Heart left ventricle (tissue), 16 donors: ENCODE measurements at regions of chr2 and their contacts with region 1.

Region 1: GRCh38 chr2:209334198-209335017 is 89.4 kb upstream of the MAP2 start:
- DNase-seq: peak; percentile 27 to 60 (median 46)
- ATAC-seq: peak in 3 of 4 donors; percentile 50 to 52 (median 51)
- H3K4me3 ChIP-seq: no peak overlapping the region
- H3K27ac ChIP-seq: no peak overlapping the region
- H3K4me1 ChIP-seq: peaks cover 0 to 6% (median 0%) of the 10 kb centered on the region in 12 donors
- H3K27me3 ChIP-seq: no peaks in the 10 kb centered on the region
- CTCF ChIP-seq: peak; percentile 82 to 98 (median 94)
- POLR2A ChIP-seq: no peak

Region 2: GRCh38 chr2:209423562-209424198 is 89.3 kb after region 1 on chr2 and contains the start of gene MAP2:
- intact Hi-C with region 1: loop called in 9 of 10 experiments (anchors 1 to 5 kb)
- DNase-seq: peak; percentile 84 to 91 (median 88)
- ATAC-seq: peak; percentile 93 to 100 (median 98)
- H3K4me3 ChIP-seq: peak within 1 kb of the TSS; percentile 30 to 77 (median 66)
- H3K27ac ChIP-seq: peak within 1 kb of the TSS in 7 of 12 donors; percentile 7 to 74 (median 44)
- H3K4me1 ChIP-seq: peaks cover 0 to 27% (median 13%) of the 10 kb centered on the region in 12 donors
- H3K27me3 ChIP-seq: peaks cover 0 to 4% (median 0%) of the 10 kb centered on the region in 9 donors
- CTCF ChIP-seq: peak; percentile 44 to 100 (median 93)
- POLR2A ChIP-seq: peak in 1 of 2 donors; percentile 78
- total RNA-seq, gene MAP2: 5.5 to 19.3 (median 8.9) TPM

Region 3: GRCh38 chr2:209565896-209566582 is 231.6 kb after region 1 on chr2:
- intact Hi-C with region 1: loop called in 2 of 10 experiments (anchors 5 kb)
- DNase-seq: no peak
- ATAC-seq: no peak
- H3K4me3 ChIP-seq: no peak overlapping the region
- H3K27ac ChIP-seq: no peak overlapping the region
- H3K4me1 ChIP-seq: no peaks in the 10 kb centered on the region
- H3K27me3 ChIP-seq: no peaks in the 10 kb centered on the region
- CTCF ChIP-seq: no peak
- POLR2A ChIP-seq: no peak

Region 4: GRCh38 chr2:209960676-209961630 is 626.5 kb after region 1 on chr2:
- intact Hi-C with region 1: loop called (anchors 1 to 10 kb)
- DNase-seq: peak in 4 of 5 donors; percentile 12 to 31 (median 28)
- ATAC-seq: peak in 3 of 4 donors; percentile 42 to 69 (median 60)
- H3K4me3 ChIP-seq: no peak overlapping the region
- H3K27ac ChIP-seq: no peak overlapping the region
- H3K4me1 ChIP-seq: no peaks in the 10 kb centered on the region
- H3K27me3 ChIP-seq: no peaks in the 10 kb centered on the region
- CTCF ChIP-seq: peak; percentile 42 to 78 (median 56)
- POLR2A ChIP-seq: no peak

Region 5: DNA sequence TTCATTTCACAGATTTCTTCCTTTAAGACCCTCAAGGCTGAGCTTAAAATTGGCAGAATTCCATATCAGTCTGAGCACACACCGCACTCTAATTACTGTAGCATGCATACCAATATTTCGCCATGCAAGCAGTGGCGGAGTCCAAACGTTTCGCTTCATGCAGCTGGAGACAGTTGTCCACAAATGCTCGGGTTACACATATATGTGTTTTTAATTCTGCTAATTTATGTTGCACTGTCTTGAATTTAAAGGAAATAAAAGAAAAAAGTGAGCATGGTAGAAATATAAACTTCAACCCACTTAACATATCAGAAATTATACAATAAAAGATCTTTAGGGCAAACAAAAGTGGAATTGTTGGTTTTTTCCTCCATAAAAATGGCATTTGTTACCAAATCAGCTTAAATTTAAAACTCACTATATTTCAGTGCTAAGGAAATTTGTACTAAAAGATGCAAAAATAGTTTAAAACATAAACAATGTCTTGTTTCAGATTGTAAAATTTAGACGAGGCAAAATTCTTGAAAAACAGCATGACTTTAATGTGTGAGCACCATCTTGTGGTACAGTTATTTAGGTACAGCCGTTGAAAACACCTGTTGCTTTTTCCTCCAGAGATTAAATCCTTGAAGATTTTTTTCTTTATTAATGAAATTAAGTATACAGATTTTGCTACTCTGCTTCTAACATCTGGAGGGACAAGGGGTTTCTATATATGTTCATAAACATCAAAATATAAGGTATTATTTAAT is 860.9 kb after region 1 on chr2:
- intact Hi-C with region 1: loop called in 3 of 10 experiments (anchors 5 to 10 kb)
- DNase-seq: no peak
- ATAC-seq: peak in 1 of 4 donors; percentile 52
- H3K4me3 ChIP-seq: peak overlapping the region in 10 of 12 donors; percentile 6 to 49 (median 36)
- H3K27ac ChIP-seq: no peak overlapping the region
- H3K4me1 ChIP-seq: peaks cover 0 to 4% (median 0%) of the 10 kb centered on the region in 12 donors
- H3K27me3 ChIP-seq: no peaks in the 10 kb centered on the region
- CTCF ChIP-seq: peak; percentile 59 to 86 (median 72)
- POLR2A ChIP-seq: no peak